Motor neuron (in vitro differentiated cells): ENCODE measurements at regions of chr4 and their contacts with region 1.

Region 1: DNA sequence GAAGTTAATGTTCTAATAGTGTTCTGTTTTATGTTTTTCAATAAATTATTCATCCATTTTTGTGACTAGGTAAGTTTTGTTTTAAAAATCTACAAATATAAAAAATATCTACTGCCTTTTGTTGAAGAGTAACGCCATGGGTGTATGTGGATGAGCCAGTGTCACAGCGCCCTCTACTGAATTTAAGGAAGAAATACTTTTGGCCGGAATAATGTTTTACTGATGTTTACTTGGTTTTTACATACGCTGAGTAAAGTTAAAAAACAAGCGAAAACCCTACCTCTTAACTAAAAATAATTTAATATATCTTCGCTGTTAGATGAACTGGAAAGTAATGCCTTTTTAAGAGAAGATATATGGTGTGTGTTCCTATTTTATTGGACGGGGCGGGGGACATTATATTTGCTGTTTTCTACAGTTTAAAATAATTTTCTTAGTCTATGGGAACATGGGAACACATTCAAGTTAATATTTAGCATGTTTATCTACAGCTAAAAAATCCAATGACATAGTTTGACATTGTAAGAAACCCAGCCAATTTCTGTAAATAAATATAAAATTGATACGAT is 86.1 kb downstream of the CPE start:
- ATAC-seq: peak; percentile 33 to 65 (median 48)
- H3K4me3 ChIP-seq: no peak overlapping the region
- H3K27ac ChIP-seq: no peak overlapping the region
- H3K4me1 ChIP-seq: peaks cover 3 to 5% of the 10 kb centered on the region in 2 donors

Region 2: GRCh38 chr4:165112368-165113139 is 352.3 kb before region 1 on chr4 and contains the start of gene TMEM192:
- in situ Hi-C with region 1: loop called in 1 of 9 experiments (anchors 25 kb)
- ATAC-seq: peak; percentile 89 to 97 (median 96)
- H3K4me3 ChIP-seq: peak within 1 kb of the TSS; percentile 57 to 85 (median 71)
- H3K27ac ChIP-seq: peak within 1 kb of the TSS; percentile 63 to 66
- H3K4me1 ChIP-seq: peaks cover 0 to 3% of the 10 kb centered on the region in 2 donors
- total RNA-seq, gene TMEM192: 5.7 to 17.4 (median 9.2) TPM

Region 3: DNA sequence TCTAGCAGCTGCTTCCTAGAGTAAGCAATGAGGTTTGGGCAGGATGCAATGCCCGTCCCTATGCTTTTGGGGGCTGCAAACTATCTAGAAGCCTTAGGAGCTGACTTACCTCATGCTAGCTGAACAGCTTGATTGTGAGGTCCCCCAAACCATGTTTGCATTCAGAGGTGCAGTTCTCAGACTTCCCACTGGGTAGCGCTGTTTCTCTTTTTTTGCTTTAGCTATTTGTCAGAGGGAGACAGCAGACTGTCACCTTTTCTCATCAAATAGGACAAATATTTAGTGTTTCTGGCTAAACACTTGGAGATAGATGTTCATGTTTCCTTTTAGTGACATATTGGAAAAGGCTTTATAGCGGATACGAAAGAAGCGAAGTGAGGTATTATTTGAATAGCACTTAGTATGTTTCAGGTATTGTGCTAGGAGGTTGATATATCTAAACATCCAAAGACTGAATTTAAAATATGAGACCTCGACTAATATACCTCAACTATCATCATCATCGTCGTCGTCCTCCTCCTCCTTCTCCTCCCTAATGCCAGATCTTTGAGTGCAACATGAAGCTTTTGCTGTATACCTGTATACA is 333.6 kb before region 1 on chr4:
- in situ Hi-C with region 1: loop called in 8 of 9 experiments (anchors 10 to 25 kb)
- ATAC-seq: peak; percentile 52 to 93 (median 71)
- H3K4me3 ChIP-seq: no peak overlapping the region
- H3K27ac ChIP-seq: no peak overlapping the region
- H3K4me1 ChIP-seq: no peaks in the 10 kb centered on the region

Region 4: DNA sequence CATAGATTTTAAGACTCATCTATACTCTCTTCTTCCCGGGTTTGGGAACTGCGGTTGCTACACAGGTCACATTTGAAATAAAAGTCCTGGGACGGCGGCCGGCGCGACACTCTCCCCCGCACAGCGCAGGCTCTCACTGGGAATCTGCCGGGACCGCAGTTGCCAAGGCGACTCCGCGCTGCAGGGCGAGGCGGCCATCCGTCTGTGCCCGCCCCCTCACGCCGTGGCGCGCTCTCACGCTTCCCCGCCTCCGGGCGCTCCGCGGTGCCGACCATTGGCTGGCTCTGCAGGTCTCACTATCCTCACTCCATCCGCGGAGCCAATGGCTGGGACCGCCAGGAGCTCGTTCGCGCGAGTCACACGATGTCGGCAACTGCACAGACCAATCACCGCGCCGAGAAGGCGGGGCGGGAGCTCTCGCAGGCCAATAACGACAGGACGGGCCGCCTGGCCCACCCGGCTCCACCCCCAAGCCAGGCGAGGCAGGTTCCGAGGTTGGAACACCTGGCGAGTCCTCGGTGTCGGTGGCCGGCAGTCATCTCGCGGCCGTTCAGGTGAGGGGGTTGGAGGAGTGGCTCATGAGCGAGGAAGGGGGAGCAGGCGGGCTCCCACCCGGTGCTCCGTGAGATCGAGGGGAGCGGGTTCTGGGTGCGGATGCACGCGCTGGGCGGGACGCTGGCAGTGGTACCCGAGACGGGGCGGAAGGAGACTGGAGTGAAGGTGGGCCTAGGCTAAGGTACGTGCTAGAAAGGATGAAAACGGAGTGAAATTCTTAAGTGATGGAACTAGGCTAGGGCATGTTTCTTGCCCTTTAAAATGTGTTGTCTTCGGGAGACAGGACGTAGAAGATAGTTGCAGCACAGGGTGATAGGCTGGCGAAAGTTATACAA is 137.4 kb before region 1 on chr4 and contains the start of gene MSMO1:
- in situ Hi-C with region 1: no loop called
- ATAC-seq: peak; percentile 92 to 96 (median 95)
- H3K4me3 ChIP-seq: peak within 1 kb of the TSS; percentile 77 to 93 (median 79)
- H3K27ac ChIP-seq: peak within 1 kb of the TSS; percentile 70 to 74
- H3K4me1 ChIP-seq: peaks cover 11 to 27% of the 10 kb centered on the region in 2 donors
- total RNA-seq, gene MSMO1: 51.0 to 211 (median 127) TPM

Region 5: GRCh38 chr4:165343353-165344191 is 121.3 kb before region 1 on chr4:
- in situ Hi-C with region 1: no loop called
- ATAC-seq: peak in 1 of 8 experiments; percentile 17
- H3K4me3 ChIP-seq: no peak overlapping the region
- H3K27ac ChIP-seq: no peak overlapping the region
- H3K4me1 ChIP-seq: peaks cover 0 to 9% of the 10 kb centered on the region in 2 donors

Region 6: DNA sequence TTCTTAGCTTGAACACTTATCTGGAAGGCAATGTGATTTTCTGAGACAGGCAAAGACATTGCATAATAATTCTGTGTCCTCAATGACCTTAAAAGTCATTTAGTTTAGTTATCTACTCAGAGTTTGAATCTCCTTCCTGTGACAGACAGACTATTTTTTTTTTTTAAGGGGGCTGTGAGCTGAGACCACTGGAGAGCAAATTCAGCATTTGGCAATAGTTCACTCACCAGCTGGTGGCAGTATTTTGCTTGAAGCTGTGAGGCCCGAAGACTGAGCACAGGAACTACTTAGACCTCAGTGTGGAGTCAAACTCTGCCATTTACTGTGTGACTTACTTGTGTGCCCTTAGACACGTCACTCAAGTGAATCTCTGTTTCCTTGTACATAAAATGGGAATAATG is 109.0 kb before region 1 on chr4:
- in situ Hi-C with region 1: loop called in 3 of 9 experiments (anchors 10 to 25 kb)
- ATAC-seq: peak in 5 of 8 experiments; percentile 44 to 77 (median 65)
- H3K4me3 ChIP-seq: no peak overlapping the region
- H3K27ac ChIP-seq: no peak overlapping the region
- H3K4me1 ChIP-seq: no peaks in the 10 kb centered on the region

Region 7: GRCh38 chr4:165381821-165382373 is 83.0 kb before region 1 on chr4:
- in situ Hi-C with region 1: no loop called
- ATAC-seq: no peak
- H3K4me3 ChIP-seq: peak overlapping the region in 2 of 5 donors; percentile 2 to 3
- H3K27ac ChIP-seq: no peak overlapping the region
- H3K4me1 ChIP-seq: peaks cover 20 to 45% of the 10 kb centered on the region in 2 donors

Region 8: DNA sequence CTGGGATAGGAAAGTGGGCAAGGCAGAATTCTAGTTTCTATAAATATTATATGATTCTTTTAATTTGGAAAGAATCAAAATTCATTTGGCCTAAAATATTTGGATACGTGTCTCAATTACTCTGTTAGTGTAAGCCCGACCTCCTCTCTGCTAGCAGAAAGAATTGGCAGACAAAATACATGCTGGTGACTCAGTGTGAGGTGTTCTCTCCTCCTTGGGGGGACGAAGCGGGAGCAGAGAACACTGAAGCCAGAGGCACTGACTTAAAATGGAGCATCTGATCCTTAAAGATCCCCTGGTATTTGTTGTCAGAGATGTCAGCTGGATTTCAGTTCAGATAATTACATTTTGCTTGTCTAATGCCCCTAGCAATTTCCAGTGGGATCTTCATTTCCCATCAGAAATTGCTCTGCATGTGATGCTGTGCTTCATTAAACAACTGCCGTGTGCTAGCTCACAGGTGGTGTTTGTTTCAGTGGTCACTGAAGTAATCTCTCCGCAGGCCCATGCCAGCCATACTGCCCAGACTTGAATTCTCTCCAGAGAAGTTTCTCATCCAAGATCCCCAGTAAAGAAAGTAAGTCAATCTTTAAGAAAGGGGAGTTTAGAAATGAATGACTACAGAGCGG is 219.4 kb after region 1 on chr4:
- in situ Hi-C with region 1: no loop called
- ATAC-seq: no peak
- H3K4me3 ChIP-seq: no peak overlapping the region
- H3K27ac ChIP-seq: no peak overlapping the region
- H3K4me1 ChIP-seq: no peaks in the 10 kb centered on the region